ENCODE measurements at regions of chr7 and their contacts with region 1.

Region 1: DNA sequence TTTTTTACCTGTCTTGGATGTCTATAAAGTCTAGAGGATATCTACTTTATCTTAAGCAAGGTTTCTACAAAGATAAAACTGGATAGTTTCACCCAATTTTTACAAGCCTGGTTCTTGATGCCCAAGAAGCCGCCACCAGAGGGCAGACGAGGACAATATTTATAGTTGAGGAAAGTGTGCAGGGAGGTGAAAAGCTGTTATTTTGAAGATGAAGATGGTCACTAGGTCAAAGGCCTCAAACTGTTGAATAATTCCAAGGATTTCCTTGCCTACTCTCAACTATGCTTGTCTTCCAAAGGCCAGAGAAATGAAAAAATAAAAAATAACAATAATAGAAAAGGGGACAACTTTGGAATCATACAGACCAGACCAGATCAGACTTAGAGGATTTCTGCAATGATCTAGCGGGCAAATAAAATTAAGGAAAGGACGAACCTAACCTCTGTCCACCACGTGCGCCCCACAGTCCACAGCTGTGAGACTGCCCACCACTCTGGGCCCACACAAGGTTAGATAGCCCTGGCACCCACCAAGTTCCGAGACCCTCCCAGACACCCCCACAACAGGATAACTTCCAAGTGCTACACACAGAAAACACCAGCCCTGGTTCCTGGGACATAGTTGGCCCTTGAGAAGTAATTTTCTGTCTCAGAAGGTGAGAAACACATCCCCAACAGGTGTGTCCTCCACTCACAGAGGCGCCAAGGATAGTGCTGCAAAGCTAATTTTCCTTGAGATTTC is 2.8 kb downstream of the PKD1L1 start:
- DNase-seq: peak; percentile 77
- H3K4me3 Mint-ChIP-seq: no peak overlapping the region
- H3K27ac Mint-ChIP-seq: no peak overlapping the region
- H3K4me1 Mint-ChIP-seq: peaks cover 11% of the 10 kb centered on the region
- H3K27me3 Mint-ChIP-seq: no peaks in the 10 kb centered on the region
- CTCF ChIP-seq: peak; percentile 71

Region 2: DNA sequence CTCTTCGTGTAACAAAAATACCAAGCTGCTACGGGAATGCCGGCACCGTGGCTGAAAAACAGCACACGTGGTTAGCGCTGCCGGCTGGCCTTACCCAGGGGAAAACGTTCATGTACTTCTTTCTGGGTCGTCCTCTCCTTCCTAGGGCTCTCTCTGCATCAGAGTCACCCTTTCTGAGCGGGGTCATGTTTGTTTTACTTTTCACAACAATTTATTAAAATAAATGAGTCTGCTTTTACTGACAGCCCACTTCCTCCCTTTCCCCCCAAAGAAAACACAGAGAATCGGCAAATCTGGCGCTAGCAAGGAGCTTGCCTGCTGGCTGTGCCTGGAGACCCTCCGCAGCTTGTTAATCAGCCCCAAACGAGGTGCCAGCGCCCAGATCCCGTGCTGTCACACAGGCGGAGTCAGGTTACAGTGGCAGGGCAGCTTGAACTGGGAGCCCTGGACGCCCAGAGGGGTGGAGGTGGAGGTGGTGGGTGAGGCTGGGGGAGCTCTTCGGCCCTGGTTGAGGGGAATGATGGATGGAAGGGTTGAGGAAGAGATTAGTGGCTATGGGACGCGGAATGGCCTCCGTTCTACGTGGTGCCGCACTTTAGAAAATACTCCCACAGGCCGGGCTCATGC is 201.4 kb before region 1 on chr7:
- CTCF ChIA-PET with region 1: no interaction called
- POLR2A ChIA-PET with region 1: no interaction called
- intact Hi-C with region 1: no loop called
- DNase-seq: no peak
- H3K4me3 Mint-ChIP-seq: no peak overlapping the region
- H3K27ac Mint-ChIP-seq: no peak overlapping the region
- H3K4me1 Mint-ChIP-seq: no peaks in the 10 kb centered on the region
- H3K27me3 Mint-ChIP-seq: no peaks in the 10 kb centered on the region
- CTCF ChIP-seq: no peak

Region 3: GRCh38 chr7:47852330-47853245 is 92.8 kb before region 1 on chr7:
- CTCF ChIA-PET with region 1: interaction called, 10 read pairs
- POLR2A ChIA-PET with region 1: no interaction called
- intact Hi-C with region 1: no loop called
- DNase-seq: peak; percentile 18
- H3K4me3 Mint-ChIP-seq: no peak overlapping the region
- H3K27ac Mint-ChIP-seq: no peak overlapping the region
- H3K4me1 Mint-ChIP-seq: no peaks in the 10 kb centered on the region
- H3K27me3 Mint-ChIP-seq: peaks cover 17% of the 10 kb centered on the region
- CTCF ChIP-seq: no peak

Region 4: GRCh38 chr7:48094751-48095562 is 149.5 kb after region 1 on chr7:
- CTCF ChIA-PET with region 1: interaction called, 314 read pairs
- POLR2A ChIA-PET with region 1: no interaction called
- intact Hi-C with region 1: no loop called
- DNase-seq: peak; percentile 42
- H3K4me3 Mint-ChIP-seq: peak overlapping the region; percentile 17
- H3K27ac Mint-ChIP-seq: peak overlapping the region; percentile 87
- H3K4me1 Mint-ChIP-seq: peaks cover 63% of the 10 kb centered on the region
- H3K27me3 Mint-ChIP-seq: no peaks in the 10 kb centered on the region
- CTCF ChIP-seq: no peak

Region 5: GRCh38 chr7:48139459-48139858 is 194.0 kb after region 1 on chr7:
- CTCF ChIA-PET with region 1: interaction called, 12 read pairs
- POLR2A ChIA-PET with region 1: no interaction called
- intact Hi-C with region 1: no loop called
- DNase-seq: peak; percentile 24
- H3K4me3 Mint-ChIP-seq: no peak overlapping the region
- H3K27ac Mint-ChIP-seq: no peak overlapping the region
- H3K4me1 Mint-ChIP-seq: no peaks in the 10 kb centered on the region
- H3K27me3 Mint-ChIP-seq: peaks cover 14% of the 10 kb centered on the region
- CTCF ChIP-seq: peak; percentile 25

Region 6: GRCh38 chr7:48161407-48162125 is 216.1 kb after region 1 on chr7:
- CTCF ChIA-PET with region 1: interaction called, 149 read pairs
- POLR2A ChIA-PET with region 1: interaction called, 3 read pairs
- intact Hi-C with region 1: no loop called
- DNase-seq: no peak
- H3K4me3 Mint-ChIP-seq: no peak overlapping the region
- H3K27ac Mint-ChIP-seq: no peak overlapping the region
- H3K4me1 Mint-ChIP-seq: no peaks in the 10 kb centered on the region
- H3K27me3 Mint-ChIP-seq: peaks cover 29% of the 10 kb centered on the region
- CTCF ChIP-seq: no peak

Region 7: GRCh38 chr7:49852619-49853462 is 1907.4 kb after region 1 on chr7:
- CTCF ChIA-PET with region 1: no interaction called
- POLR2A ChIA-PET with region 1: no interaction called
- intact Hi-C with region 1: loop called (anchors 10 kb)
- DNase-seq: peak; percentile 66
- H3K4me3 Mint-ChIP-seq: no peak overlapping the region
- H3K27ac Mint-ChIP-seq: no peak overlapping the region
- H3K4me1 Mint-ChIP-seq: no peaks in the 10 kb centered on the region
- H3K27me3 Mint-ChIP-seq: peaks cover 33% of the 10 kb centered on the region
- CTCF ChIP-seq: peak; percentile 90